ENCODE measurements at regions of chr4 and their contacts with region 1.

Region 1: GRCh38 chr4:4488405-4489404 is 53.1 kb downstream of the STX18 start:
- DNase-seq: peak; percentile 58 to 77 (median 60)
- ATAC-seq: peak; percentile 88 to 89
- H3K4me3 ChIP-seq: no peak overlapping the region
- H3K27ac ChIP-seq: no peak overlapping the region
- H3K4me1 ChIP-seq: no peaks in the 10 kb centered on the region
- H3K27me3 ChIP-seq: no peaks in the 10 kb centered on the region

Region 2: GRCh38 chr4:4869731-4870571 is 381.2 kb after region 1 on chr4:
- intact Hi-C with region 1: loop called in 1 of 4 experiments (anchors 10 kb)
- DNase-seq: no peak
- ATAC-seq: no peak
- H3K4me3 ChIP-seq: no peak overlapping the region
- H3K27ac ChIP-seq: no peak overlapping the region
- H3K4me1 ChIP-seq: peaks cover 4% of the 10 kb centered on the region
- H3K27me3 ChIP-seq: no peaks in the 10 kb centered on the region

Region 3: GRCh38 chr4:4880492-4880891 is 391.8 kb after region 1 on chr4:
- intact Hi-C with region 1: loop called in 2 of 4 experiments (anchors 10 kb)
- DNase-seq: no peak
- ATAC-seq: no peak
- H3K4me3 ChIP-seq: no peak overlapping the region
- H3K27ac ChIP-seq: no peak overlapping the region
- H3K4me1 ChIP-seq: no peaks in the 10 kb centered on the region
- H3K27me3 ChIP-seq: no peaks in the 10 kb centered on the region

Region 4: DNA sequence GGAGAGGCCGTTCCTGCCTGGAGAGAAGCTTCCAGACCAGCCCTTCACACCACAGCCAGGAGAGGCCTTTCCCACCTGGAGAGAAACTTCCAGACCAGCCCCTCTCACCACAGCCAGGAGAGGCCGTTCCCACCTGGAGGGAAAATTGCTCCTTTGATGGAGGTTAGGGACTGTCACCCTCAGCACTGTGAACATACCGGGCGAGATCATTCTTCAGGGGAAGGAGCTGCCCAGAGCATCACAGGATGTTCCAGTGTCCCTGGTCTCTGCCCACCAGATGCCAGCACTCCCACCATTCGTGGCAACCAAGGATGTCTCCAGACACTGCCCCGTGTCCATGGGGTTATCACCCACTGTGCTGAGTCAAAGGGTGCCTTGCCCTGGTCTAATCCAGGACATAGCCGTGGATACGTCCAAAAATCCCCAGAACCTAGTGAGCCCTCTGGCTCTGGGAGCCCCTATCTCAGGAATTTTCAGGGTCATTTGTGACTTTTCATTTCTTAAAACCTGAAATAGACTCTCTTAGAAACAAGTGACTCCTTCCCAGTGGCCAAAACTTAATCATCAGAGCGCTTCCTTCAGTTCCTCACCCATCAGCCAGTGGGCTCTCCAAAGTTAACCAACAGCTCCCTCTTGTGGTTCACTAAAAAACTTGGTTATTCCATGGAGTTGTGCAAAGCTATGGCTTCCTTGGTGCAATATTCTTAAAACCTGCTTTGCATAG is 1324.0 kb after region 1 on chr4:
- intact Hi-C with region 1: loop called in 1 of 4 experiments (anchors 10 kb)
- DNase-seq: no peak
- ATAC-seq: peak; percentile 70 to 75
- H3K4me3 ChIP-seq: no peak overlapping the region
- H3K27ac ChIP-seq: no peak overlapping the region
- H3K4me1 ChIP-seq: no peaks in the 10 kb centered on the region
- H3K27me3 ChIP-seq: no peaks in the 10 kb centered on the region

Measured in right cardiac atrium (tissue), 5 donors.